Naive thymus-derived CD4-positive, alpha-beta T cell (primary cell): ENCODE measurements at regions of chr7 and their contacts with region 1.

Region 1: DNA sequence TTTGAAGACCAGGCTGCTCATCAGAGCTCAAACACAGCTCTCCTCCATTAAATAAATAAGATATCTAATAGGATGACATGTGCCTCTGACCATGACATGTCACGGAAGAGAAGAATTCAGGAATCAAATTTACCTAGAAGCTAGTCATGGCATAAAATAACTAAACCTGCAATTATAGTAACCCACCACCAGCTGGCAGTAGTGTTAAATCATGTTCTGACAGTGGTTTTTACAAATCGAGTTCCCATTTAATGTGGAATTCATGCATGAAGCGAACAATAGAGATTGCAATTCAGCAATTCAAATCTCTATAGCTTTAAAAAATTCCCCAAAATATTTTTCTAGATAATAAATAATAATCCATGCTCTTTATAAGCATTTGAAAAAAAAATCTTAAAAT is 74.6 kb upstream of the IKZF1 start:
- DNase-seq: no peak
- ATAC-seq: no peak
- H3K4me3 ChIP-seq: no peak overlapping the region
- H3K4me3 Mint-ChIP-seq: no peak overlapping the region
- H3K27ac ChIP-seq: no peak overlapping the region
- H3K27ac Mint-ChIP-seq: peak overlapping the region in 1 of 9 donors; percentile 81
- H3K4me1 ChIP-seq: peaks cover 15 to 20% of the 10 kb centered on the region in 2 donors
- H3K4me1 Mint-ChIP-seq: peaks cover 31 to 44% (median 39%) of the 10 kb centered on the region in 7 donors
- H3K27me3 ChIP-seq: no peaks in the 10 kb centered on the region
- H3K27me3 Mint-ChIP-seq: no peaks in the 10 kb centered on the region

Region 2: DNA sequence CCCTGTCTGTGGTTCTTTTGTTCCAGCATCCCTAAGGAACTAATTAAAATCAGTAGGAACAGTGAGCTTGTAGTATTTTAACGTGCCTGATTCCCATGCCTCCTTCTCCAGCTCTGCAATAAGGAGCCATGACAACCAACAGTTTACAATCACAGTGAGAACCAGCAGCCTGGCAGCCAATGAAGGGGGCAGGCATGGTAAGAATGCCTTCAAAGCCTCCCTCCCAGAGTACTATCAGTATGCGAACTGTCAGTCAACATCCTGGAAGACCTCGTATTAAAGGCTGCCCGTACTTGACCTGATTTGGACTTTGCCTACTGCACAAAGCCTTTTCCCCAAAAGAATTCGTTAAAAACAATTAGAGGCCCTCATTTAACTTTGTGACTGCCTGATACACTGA is 144.6 kb before region 1 on chr7:
- CTCF ChIA-PET with region 1: no interaction called
- POLR2A ChIA-PET with region 1: no interaction called
- intact Hi-C with region 1: no loop called
- DNase-seq: no peak
- ATAC-seq: no peak
- H3K4me3 ChIP-seq: no peak overlapping the region
- H3K4me3 Mint-ChIP-seq: no peak overlapping the region
- H3K27ac ChIP-seq: no peak overlapping the region
- H3K27ac Mint-ChIP-seq: no peak overlapping the region
- H3K4me1 ChIP-seq: no peaks in the 10 kb centered on the region
- H3K4me1 Mint-ChIP-seq: no peaks in the 10 kb centered on the region
- H3K27me3 ChIP-seq: no peaks in the 10 kb centered on the region
- H3K27me3 Mint-ChIP-seq: peaks cover 0 to 59% (median 9%) of the 10 kb centered on the region in 5 donors

Region 3: GRCh38 chr7:50182759-50183158 is 47.2 kb before region 1 on chr7:
- CTCF ChIA-PET with region 1: no interaction called
- POLR2A ChIA-PET with region 1: no interaction called
- intact Hi-C with region 1: no loop called
- DNase-seq: no peak
- ATAC-seq: no peak
- H3K4me3 ChIP-seq: no peak overlapping the region
- H3K4me3 Mint-ChIP-seq: no peak overlapping the region
- H3K27ac ChIP-seq: no peak overlapping the region
- H3K27ac Mint-ChIP-seq: peak overlapping the region in 1 of 9 donors; percentile 3
- H3K4me1 ChIP-seq: no peaks in the 10 kb centered on the region
- H3K4me1 Mint-ChIP-seq: peaks cover 0 to 4% (median 0%) of the 10 kb centered on the region in 7 donors
- H3K27me3 ChIP-seq: no peaks in the 10 kb centered on the region
- H3K27me3 Mint-ChIP-seq: peaks cover 0 to 16% (median 0%) of the 10 kb centered on the region in 5 donors

Region 4: DNA sequence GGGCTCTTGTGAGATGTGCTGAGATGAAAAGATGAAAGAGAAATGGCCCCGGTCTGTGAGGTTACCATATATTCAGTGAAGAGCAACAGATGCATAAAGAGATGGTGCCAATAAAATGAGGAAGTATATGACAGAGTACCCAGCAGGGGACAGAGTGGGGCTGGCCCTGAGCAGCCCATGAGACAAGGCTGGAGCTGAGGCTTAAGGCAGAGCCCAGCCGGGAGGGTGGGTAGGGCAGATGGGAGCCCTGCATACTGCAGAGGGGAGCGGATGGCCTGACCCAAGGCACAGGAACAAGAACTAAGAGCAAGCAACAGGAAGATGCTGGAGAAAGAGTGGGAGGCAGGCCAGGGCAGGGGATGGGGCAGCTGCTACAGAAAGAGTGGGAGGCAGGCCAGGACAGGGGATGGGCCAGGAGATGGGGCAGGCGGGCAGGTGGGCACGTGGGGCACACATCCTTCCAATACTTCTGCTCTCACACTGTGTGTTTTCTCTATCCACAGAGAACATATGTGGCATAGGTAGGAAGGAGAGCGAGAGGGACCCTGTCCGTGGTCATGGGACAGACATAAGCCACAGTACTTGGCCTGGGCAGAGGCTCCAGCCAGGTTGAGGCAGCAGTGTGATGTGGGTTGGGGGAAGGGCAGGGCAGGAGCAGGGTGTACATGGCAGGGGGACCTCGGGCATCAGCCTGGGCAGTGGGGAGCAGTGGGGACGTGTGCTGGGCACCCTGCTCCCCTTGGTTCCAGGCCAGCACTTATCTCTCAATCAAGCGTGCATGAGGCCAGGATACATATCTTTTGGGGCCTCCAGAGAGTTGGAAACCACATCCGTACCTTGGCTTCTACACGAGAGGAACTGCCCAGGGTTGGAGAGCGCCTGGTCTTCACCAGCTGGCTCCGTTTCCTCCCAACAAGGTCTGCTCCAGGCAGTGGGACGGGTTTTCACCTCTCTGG is 17.0 kb before region 1 on chr7:
- CTCF ChIA-PET with region 1: interaction called, 6 read pairs
- POLR2A ChIA-PET with region 1: interaction called, 69 read pairs
- intact Hi-C with region 1: loop called in 1 of 2 experiments (anchors 1 kb)
- DNase-seq: peak in 5 of 9 donors; percentile 24 to 49 (median 41)
- ATAC-seq: peak; percentile 63
- H3K4me3 ChIP-seq: no peak overlapping the region
- H3K4me3 Mint-ChIP-seq: peak overlapping the region; percentile 44 to 89 (median 68)
- H3K27ac ChIP-seq: no peak overlapping the region
- H3K27ac Mint-ChIP-seq: peak overlapping the region; percentile 26 to 94 (median 83)
- H3K4me1 ChIP-seq: peaks cover 17 to 86% of the 10 kb centered on the region in 2 donors
- H3K4me1 Mint-ChIP-seq: peaks cover 69 to 100% (median 98%) of the 10 kb centered on the region in 7 donors
- H3K27me3 ChIP-seq: no peaks in the 10 kb centered on the region
- H3K27me3 Mint-ChIP-seq: no peaks in the 10 kb centered on the region

Region 5: DNA sequence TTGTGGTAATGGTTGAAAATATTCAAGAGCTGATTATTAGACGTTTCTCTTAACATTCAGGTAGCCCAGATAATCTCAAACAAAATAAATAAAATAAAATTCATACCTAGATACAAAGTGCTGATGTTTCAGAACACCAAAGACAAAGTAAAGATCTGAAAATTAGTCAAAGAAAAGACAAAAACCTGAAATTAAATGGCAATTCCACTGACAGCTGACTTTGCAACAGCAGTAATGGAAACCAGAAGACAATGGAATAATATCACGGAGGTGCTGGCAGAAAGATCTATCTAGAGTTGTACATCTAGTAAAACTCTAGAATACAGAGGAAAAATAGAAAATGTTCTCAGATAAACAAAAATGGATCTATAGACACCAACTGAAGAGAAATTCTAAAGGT is 16.6 kb after region 1 on chr7:
- CTCF ChIA-PET with region 1: interaction called, 4 read pairs
- POLR2A ChIA-PET with region 1: interaction called, 8 read pairs
- intact Hi-C with region 1: loop called in 1 of 2 experiments (anchors 2 kb)
- DNase-seq: no peak
- ATAC-seq: no peak
- H3K4me3 ChIP-seq: no peak overlapping the region
- H3K4me3 Mint-ChIP-seq: no peak overlapping the region
- H3K27ac ChIP-seq: no peak overlapping the region
- H3K27ac Mint-ChIP-seq: peak overlapping the region in 1 of 9 donors; percentile 14
- H3K4me1 ChIP-seq: no peaks in the 10 kb centered on the region
- H3K4me1 Mint-ChIP-seq: peaks cover 0 to 33% (median 21%) of the 10 kb centered on the region in 7 donors
- H3K27me3 ChIP-seq: no peaks in the 10 kb centered on the region
- H3K27me3 Mint-ChIP-seq: no peaks in the 10 kb centered on the region

Region 6: DNA sequence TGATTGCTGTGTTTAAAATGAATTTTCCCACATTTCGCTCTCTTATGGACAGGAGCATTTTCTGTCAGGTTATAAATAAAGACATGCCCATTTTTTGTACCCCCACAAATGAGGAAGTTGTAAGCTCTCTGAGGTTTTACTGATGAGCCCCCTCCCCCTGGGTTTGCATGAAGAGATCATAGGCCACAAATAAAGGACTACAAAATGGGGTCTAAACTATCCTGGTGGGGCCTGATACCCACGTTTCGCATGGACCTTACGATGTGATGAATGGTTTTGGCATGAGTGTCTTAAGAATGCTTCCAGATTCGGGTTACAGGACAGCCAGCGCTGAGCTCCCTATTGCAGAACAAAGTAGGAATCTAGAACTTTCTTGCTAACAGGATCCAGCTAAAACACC is 80.4 kb after region 1 on chr7:
- CTCF ChIA-PET with region 1: interaction called, 6 read pairs
- POLR2A ChIA-PET with region 1: interaction called, 13 read pairs
- intact Hi-C with region 1: no loop called
- DNase-seq: no peak
- ATAC-seq: no peak
- H3K4me3 ChIP-seq: peak overlapping the region; percentile 84
- H3K4me3 Mint-ChIP-seq: peak overlapping the region; percentile 91 to 100 (median 99)
- H3K27ac ChIP-seq: peak overlapping the region; percentile 90
- H3K27ac Mint-ChIP-seq: peak overlapping the region in 6 of 9 donors; percentile 97 to 100 (median 99)
- H3K4me1 ChIP-seq: peaks cover 36 to 65% of the 10 kb centered on the region in 2 donors
- H3K4me1 Mint-ChIP-seq: peaks cover 16 to 74% (median 59%) of the 10 kb centered on the region in 7 donors
- H3K27me3 ChIP-seq: no peaks in the 10 kb centered on the region
- H3K27me3 Mint-ChIP-seq: no peaks in the 10 kb centered on the region

Region 7: GRCh38 chr7:50838675-50839377 is 608.9 kb after region 1 on chr7:
- CTCF ChIA-PET with region 1: no interaction called
- POLR2A ChIA-PET with region 1: no interaction called
- intact Hi-C with region 1: no loop called
- DNase-seq: no peak
- ATAC-seq: no peak
- H3K4me3 ChIP-seq: no peak overlapping the region
- H3K4me3 Mint-ChIP-seq: no peak overlapping the region
- H3K27ac ChIP-seq: no peak overlapping the region
- H3K27ac Mint-ChIP-seq: no peak overlapping the region
- H3K4me1 ChIP-seq: no peaks in the 10 kb centered on the region
- H3K4me1 Mint-ChIP-seq: peaks cover 0 to under 1% (median 0%) of the 10 kb centered on the region in 7 donors
- H3K27me3 ChIP-seq: no peaks in the 10 kb centered on the region
- H3K27me3 Mint-ChIP-seq: peaks cover 12 to 41% (median 26%) of the 10 kb centered on the region in 5 donors